Heart right ventricle (tissue), 16 donors: ENCODE measurements at regions of chr7 and their contacts with region 1.

Region 1: DNA sequence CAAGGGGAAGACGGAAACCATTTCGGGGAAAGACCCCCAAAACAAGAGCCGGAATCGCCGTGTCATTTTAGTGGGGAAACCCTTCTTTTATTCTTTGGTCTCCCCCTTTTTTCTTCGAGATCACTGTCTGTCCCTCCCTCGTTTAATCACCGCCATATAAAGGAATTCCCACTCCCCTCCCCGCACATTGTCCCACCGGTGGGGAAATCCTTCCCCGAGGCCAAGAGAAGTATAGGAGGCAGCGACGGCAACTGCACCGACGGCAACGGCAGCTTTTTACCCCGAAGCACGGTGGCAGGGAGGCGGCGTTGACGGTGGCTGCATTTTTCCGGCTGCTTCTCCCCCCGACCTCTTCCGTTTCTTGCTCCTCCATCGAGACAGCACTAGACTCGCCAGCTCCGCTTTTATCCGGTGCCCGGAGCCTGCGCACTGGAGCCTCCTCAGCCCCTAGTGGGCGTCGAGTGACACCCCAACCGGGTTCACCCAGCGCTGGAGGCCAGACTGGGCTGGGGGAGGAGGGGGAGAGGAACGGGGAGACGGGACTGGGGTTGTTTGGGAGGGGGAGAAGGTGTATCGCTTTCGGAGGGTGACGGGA is 687 bp upstream of the KMT2E start:
- DNase-seq: peak; percentile 94 to 96
- ATAC-seq: peak; percentile 82 to 93 (median 85)
- H3K4me3 ChIP-seq: peak overlapping the region; percentile 64 to 92 (median 82)
- H3K27ac ChIP-seq: peak overlapping the region; percentile 93 to 100 (median 100)
- H3K4me1 ChIP-seq: peaks cover 0 to 51% (median 45%) of the 10 kb centered on the region in 9 donors
- H3K27me3 ChIP-seq: no peaks in the 10 kb centered on the region
- CTCF ChIP-seq: peak; percentile 32 to 62 (median 51)

Region 2: DNA sequence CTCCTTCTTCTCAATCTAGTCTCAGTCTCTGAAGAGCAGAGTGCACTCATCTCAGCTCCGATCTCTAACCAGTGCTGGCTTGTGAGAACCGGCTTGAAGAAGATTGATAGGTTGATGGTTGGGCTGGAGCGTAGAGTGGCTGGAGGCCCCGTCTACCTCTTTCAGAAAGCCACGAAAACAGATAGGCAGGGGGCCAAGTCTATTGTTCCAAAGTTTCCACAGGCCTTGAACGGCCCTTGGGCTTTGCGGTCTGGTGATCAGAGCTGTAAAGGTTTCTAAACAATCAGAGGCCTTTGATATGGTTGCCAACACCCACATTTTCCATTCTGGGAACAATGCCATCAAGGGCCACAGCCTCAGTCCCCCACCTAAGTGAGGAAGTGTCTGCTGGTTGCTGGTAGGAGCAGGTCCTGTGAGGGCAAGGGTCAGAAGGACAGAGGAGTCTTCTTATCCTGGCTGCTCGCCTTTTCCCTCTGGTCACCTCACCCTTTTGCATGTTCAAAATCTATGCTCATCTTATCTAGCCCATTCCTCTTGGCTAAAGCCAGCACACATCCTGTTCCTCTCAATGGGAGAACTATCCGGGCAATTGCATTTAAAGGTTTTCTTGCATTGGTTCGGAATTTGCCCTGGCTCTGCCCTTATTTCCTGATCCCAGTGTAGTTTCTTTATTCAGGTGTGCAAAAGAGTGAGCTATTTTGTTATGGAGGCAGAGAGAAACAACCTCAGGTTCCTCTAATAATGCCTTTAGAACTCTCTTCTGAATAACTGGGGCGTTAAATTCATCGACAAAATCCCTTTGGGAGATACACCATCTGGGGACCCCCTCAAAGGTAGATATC is 69.6 kb before region 1 on chr7:
- intact Hi-C with region 1: loop called in 6 of 10 experiments (anchors 1 to 10 kb)
- DNase-seq: peak; percentile 32 to 94
- ATAC-seq: peak; percentile 30 to 76 (median 63)
- H3K4me3 ChIP-seq: peak overlapping the region in 3 of 10 donors; percentile 16 to 55 (median 31)
- H3K27ac ChIP-seq: peak overlapping the region; percentile 77 to 98 (median 94)
- H3K4me1 ChIP-seq: peaks cover 0 to 44% (median 36%) of the 10 kb centered on the region in 9 donors
- H3K27me3 ChIP-seq: no peaks in the 10 kb centered on the region
- CTCF ChIP-seq: no peak

Region 3: GRCh38 chr7:104973909-104974415 is 39.4 kb before region 1 on chr7:
- intact Hi-C with region 1: no loop called
- DNase-seq: no peak
- ATAC-seq: peak; percentile 41 to 76 (median 64)
- H3K4me3 ChIP-seq: no peak overlapping the region
- H3K27ac ChIP-seq: peak overlapping the region; percentile 55 to 98 (median 84)
- H3K4me1 ChIP-seq: peaks cover 15 to 80% (median 61%) of the 10 kb centered on the region in 9 donors
- H3K27me3 ChIP-seq: no peaks in the 10 kb centered on the region
- CTCF ChIP-seq: no peak

Region 4: DNA sequence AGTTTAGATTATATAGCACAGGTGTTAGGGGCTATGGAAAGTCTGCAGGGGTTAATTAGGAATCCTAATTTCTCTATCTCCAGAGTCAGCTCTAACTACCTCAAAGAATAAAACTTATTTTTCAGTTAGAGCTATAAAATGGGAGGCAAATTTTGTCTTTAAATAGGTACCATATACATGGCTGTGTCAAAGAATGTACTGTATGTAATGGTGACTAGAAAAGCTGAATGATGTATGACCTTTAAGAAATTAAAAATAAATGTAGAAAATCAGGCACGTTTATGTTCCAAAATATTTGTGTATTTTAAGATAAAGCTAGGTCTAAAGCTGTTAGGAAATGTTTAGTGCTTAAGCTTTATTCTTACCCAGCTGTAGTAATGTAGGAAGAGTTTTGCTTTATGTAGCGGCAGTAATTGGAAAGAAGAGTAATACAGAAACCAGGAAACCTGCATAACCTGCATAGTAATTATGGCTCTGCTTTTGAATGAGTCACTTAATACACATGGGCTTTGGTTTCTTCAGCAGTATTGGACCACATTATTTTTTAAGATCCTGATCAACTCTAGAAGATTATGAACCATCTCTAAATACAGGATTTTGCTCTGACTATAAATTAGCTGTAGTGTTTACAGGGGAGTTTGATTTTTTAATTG is 85.7 kb after region 1 on chr7:
- intact Hi-C with region 1: loop called in 1 of 10 experiments (anchors 5 kb)
- DNase-seq: no peak
- ATAC-seq: peak in 1 of 8 donors; percentile 32
- H3K4me3 ChIP-seq: no peak overlapping the region
- H3K27ac ChIP-seq: peak overlapping the region in 1 of 10 donors; percentile 17
- H3K4me1 ChIP-seq: peaks cover 0 to 45% (median 19%) of the 10 kb centered on the region in 9 donors
- H3K27me3 ChIP-seq: no peaks in the 10 kb centered on the region
- CTCF ChIP-seq: no peak